Calu3 (cell line): ENCODE measurements at regions of chr5 and their contacts with region 1.

Region 1: DNA sequence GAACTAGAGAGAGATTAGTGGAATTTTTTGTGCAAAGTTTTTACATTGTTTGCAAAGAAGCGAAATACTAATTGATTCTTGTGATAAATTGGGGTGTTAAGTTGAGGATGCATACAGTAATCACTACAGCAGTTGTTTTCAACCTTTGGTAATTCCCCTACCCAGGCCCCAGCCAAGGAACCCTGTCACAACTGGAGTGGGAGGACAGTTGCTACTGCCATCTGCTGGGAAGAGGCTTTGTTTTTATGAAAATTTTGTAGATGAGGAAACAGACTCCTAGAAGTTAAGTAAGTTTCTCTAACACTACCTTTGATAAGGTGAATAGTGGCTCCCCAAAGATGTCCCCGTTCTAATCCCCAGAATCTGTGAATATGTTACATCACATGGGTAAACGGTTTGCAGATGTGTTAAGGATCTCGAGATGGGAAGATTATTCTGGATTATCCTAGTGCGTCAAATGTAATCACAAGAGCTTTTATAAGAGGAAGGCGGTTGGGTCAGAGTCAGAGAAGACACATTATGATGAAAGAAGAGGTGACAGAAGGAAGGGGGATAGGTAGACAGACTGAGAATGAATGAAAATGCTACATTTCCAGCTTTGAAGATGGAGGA is 34.0 kb upstream of the PPP1R2B start:
- DNase-seq: peak; percentile 64
- H3K4me3 Mint-ChIP-seq: no peak overlapping the region
- H3K27ac Mint-ChIP-seq: no peak overlapping the region
- H3K4me1 Mint-ChIP-seq: no peaks in the 10 kb centered on the region
- H3K27me3 Mint-ChIP-seq: no peaks in the 10 kb centered on the region
- CTCF ChIP-seq: peak; percentile 35

Region 2: DNA sequence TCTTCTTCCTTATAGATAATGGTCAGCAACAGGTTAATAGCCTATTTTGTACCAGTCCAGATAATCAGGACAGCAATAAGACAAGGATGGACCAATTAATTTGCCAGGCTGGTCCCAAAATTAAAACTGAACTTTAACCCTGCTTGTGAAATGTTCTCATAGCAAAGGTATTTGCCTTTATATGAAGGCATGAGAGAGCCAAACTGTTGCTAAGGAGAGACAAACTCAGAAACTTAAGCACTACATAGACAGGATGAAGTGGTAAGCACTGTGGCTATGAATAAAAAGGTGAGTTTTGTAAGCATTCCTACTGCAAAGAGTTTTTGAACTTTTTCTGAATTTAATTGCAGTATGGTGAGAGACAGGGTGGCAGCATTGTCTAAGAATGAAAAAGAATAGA is 140.7 kb before region 1 on chr5:
- CTCF ChIA-PET with region 1: no interaction called
- intact Hi-C with region 1: loop called (anchors 5 kb)
- DNase-seq: no peak
- H3K4me3 Mint-ChIP-seq: no peak overlapping the region
- H3K27ac Mint-ChIP-seq: no peak overlapping the region
- H3K4me1 Mint-ChIP-seq: peaks cover 17% of the 10 kb centered on the region
- H3K27me3 Mint-ChIP-seq: no peaks in the 10 kb centered on the region
- CTCF ChIP-seq: no peak